Right ventricle myocardium inferior (tissue), 1 donor: ENCODE measurements at regions of chr5 and their contacts with region 1.

Region 1: GRCh38 chr5:102865510-102866236 is 110.6 kb downstream of the PAM start:
- DNase-seq: peak; percentile 86
- ATAC-seq: peak; percentile 93

Region 2: GRCh38 chr5:102782311-102782770 is 83.3 kb before region 1 on chr5:
- intact Hi-C with region 1: loop called (anchors 2 kb)
- DNase-seq: no peak
- ATAC-seq: no peak

Region 3: DNA sequence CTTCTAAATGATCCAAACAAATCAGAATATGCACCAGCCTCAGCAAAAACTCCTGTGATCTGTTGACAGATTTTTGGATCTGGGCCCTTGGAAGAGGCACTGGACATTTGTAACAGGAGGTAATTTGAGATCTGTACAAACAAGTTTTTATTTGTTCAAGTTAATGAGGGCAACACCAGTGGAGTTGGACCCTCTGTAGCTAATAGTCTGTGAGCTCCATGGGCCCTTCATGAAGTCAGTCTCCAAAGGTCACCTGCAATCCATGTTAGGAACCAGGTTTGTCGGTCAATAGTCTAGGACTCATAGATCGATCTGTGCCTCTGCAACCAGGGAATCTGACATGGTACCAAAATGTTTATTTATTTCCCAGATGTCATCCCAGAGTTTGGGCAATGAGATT is 69.7 kb before region 1 on chr5:
- intact Hi-C with region 1: loop called (anchors 2 kb)
- DNase-seq: no peak
- ATAC-seq: peak; percentile 50

Region 4: DNA sequence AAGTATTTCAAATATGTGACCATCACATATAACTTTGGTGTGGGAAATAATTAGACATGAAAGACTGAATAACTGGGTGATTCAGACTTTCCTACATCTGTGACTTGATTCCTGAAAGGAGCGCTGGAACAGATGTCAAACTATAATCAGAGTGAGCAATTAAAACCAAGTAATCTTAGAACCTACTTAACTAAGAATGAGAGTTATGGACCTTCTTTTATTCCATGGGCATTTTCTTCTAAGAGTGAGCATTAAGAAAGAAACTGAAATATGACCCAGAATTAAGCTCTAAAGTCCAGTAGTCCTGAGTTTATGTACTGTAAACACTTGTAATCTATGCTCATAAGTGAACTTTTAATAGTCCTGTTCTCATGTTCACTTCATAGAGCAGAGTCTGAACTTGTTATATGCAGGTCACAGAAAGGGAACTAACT is 42.2 kb before region 1 on chr5:
- intact Hi-C with region 1: loop called (anchors 5 kb)
- DNase-seq: no peak
- ATAC-seq: no peak

Region 5: GRCh38 chr5:102875721-102876123 is 10.0 kb after region 1 on chr5:
- intact Hi-C with region 1: no loop called
- DNase-seq: no peak
- ATAC-seq: no peak

Region 6: GRCh38 chr5:102922799-102923477 is 57.3 kb after region 1 on chr5:
- intact Hi-C with region 1: loop called (anchors 5 kb)
- DNase-seq: no peak
- ATAC-seq: no peak